Sciatic nerve (tissue), 2 donors: ENCODE measurements at regions of chr14 and their contacts with region 1.

Region 1: DNA sequence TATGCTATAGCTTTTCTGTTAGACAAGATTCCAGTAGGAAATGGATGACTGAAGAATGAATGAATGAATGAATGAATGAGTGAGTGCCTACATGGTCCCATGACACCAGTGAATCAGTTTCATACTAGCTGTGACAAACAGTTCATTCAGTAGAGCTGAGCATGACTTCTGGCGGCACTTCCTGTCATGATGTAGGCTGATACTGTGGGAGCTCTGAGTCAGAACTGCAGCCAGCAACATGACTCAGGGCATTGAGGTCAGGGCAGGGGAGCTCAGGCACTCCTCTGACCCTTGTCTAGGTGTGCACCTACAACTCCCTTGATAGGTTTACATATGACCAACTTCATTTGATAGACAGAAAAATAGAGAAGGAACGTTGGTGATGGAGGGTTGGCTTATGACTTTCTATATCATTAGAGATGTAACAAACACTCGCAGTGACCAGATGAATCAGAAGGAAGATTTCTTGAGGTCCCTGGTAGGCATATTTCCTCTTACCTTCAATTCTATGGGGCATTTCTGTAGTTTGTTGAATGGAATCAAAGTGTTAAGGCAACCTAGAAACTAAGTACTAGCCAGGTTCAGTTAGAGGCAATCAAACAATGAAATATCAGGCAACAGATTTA is 139.3 kb upstream of the ARHGAP5 start:
- DNase-seq: peak; percentile 63
- ATAC-seq: peak; percentile 69

Region 2: DNA sequence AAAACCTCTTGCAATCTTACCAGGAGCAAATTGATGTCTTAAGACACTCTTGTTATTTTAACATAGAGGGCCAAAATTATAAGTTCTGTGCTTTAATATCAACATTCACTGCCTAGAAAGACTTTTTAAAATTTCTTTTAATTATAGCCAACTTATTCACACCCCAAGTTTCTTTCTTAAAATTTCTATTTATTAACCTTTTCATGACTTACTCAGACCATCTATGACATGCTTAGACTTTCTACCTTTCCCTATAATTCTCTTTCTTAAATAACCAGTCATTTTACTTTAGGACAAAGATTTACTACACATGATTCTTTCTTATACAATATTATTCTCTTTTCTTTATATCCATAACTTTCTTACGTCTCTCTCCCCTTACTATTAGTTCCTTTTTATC is 156.3 kb before region 1 on chr14:
- intact Hi-C with region 1: no loop called
- DNase-seq: no peak
- ATAC-seq: no peak

Region 3: DNA sequence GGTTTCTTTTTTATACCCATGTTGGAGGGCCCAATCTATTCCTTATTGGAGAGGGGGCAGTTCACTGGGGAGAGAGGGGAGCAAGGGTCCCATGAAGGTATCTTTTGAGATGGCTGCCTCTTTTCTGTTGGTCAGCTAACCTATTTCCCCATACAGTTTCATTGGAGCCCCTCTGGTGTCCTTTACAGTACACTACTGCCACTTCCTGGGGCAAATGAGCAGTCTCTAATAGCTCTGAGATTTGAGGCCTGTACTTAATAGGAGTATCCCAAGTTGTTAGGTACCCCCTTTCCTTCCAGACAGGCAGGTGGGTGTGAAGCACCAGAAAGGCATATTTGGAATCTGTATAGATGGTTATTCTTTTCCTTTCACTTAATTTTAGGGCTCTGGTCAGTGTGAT is 306.6 kb after region 1 on chr14:
- intact Hi-C with region 1: loop called (anchors 10 kb)
- DNase-seq: no peak
- ATAC-seq: no peak

Region 4: DNA sequence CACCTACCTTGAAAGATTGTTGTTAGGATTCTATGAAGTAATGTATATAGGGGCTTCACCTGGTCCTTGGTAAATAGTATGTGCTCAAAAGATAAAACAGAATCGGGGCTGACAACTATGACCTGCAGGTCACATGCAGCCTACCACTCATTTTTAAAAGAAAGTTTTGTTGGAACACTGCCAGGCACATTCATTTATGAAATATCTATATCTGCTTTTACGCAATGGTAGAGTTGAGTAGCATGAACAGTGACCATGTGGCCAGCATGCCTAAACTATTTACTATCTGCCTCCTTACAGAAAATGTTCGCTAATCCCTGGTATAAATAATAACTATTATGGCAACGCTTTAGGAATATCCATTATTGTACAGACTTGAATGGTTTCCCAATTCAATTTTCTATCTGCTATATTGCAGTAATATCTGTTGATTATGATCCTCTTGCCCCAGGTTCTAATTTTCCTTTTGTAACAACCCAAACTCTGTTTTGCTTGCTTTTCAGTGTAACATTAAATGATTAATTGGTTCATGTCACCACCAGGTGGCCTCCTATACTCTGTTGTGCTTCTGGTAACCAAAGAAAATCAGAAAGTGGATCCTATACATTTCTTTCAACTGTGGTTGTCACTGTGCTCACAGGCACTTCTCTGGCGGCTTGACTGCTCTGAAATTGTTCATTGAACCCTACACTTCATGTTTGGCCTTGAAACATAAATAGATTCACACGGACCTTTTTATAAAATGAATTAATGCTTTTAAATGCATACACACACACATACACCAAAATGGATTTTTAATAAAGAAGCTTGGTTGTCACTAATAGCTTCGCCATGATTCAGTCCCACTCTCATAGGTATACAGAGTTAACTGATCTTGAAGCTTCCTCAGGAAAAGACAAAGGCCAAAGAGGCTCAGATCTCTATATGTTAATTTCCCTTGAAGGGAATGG is 773.2 kb after region 1 on chr14:
- intact Hi-C with region 1: loop called (anchors 5 kb)
- DNase-seq: no peak
- ATAC-seq: no peak